ENCODE measurements at regions of chr12 and their contacts with region 1.

Region 1: GRCh38 chr12:56521590-56522371 is at the start of gene RBMS2:
- DNase-seq: peak; percentile 94
- total RNA-seq, gene RBMS2: 11.9 and 16.6 TPM in 2 replicates

Region 2: DNA sequence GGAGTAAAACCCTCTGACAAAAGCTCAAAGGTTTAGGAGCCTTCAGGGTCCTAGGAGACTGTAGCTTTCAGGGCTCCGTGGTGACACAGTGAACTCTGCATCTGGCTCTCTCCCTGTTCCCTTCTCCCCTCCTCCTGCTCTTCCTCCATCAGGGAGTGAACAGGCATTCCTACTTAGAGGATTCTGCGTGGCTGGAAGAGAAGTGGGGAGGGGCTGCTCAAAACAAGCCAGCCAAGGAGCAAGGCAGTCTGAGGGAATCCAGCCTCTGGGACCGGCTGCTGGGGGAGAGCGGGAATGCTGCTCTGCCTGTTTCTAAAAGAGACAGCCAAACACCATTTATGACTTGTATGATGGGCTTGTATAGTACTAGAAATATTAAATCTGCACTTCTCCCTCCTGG is 49.3 kb after region 1 on chr12:
- in situ Hi-C with region 1: loop called (anchors 5 kb)
- DNase-seq: no peak

Region 3: GRCh38 chr12:56628671-56629458 is 107.1 kb after region 1 on chr12:
- in situ Hi-C with region 1: loop called (anchors 5 kb)
- DNase-seq: peak; percentile 47

Measured in Caki2 (cell line).